ENCODE measurements at regions of chr9 and their contacts with region 1.

Region 1: GRCh38 chr9:135864447-135865049 is 42.8 kb downstream of the CAMSAP1 start:
- DNase-seq: peak; percentile 78

Region 2: DNA sequence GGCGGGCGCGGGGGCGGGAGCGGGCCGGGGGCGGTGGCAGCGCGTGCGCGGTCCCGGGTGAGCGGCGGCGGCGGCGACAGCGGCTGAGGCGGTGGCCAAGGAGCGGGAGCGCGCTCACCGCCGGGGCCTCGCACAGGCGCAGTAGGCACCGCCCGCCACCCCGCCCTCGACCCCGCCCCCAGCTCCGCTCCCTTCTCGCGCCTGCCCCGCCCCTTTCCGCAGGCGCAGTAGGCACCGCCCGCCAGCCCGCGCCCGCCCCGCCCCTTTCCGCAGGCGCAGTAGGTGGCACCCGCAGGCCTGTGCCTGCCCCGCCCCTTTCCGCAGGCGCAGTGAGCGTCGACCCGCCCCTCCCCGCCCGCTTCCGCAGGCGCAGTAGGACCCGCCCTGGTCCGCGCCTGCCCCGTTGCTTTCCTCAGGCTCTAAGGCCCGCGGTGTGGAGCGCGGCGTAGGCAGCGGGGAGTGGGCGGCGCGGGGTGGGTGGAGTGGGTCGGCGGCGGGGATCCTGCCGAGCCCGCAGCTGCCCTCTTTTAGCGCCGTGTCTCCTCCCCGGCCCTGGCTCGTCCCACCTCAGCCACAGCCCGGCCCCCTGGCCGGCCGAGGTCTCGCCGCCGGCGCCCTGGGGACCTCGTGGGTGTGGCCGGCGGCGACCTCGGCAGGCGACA is 43.0 kb after region 1 on chr9 and contains the start of gene CAMSAP1:
- intact Hi-C with region 1: loop called (anchors 5 kb)
- DNase-seq: peak; percentile 98
- total RNA-seq, gene CAMSAP1: 25.5 TPM

Region 3: GRCh38 chr9:135955934-135956801 is 91.6 kb after region 1 on chr9:
- intact Hi-C with region 1: loop called (anchors 2 kb)
- DNase-seq: no peak

Measured in cardiac septum (tissue), 1 donor.